ENCODE measurements at regions of chr1 and their contacts with region 1.

Region 1: GRCh38 chr1:42958488-42959319 is at the start of gene SLC2A1:
- DNase-seq: peak; percentile 97
- total RNA-seq, gene SLC2A1: 31.9 TPM

Region 2: DNA sequence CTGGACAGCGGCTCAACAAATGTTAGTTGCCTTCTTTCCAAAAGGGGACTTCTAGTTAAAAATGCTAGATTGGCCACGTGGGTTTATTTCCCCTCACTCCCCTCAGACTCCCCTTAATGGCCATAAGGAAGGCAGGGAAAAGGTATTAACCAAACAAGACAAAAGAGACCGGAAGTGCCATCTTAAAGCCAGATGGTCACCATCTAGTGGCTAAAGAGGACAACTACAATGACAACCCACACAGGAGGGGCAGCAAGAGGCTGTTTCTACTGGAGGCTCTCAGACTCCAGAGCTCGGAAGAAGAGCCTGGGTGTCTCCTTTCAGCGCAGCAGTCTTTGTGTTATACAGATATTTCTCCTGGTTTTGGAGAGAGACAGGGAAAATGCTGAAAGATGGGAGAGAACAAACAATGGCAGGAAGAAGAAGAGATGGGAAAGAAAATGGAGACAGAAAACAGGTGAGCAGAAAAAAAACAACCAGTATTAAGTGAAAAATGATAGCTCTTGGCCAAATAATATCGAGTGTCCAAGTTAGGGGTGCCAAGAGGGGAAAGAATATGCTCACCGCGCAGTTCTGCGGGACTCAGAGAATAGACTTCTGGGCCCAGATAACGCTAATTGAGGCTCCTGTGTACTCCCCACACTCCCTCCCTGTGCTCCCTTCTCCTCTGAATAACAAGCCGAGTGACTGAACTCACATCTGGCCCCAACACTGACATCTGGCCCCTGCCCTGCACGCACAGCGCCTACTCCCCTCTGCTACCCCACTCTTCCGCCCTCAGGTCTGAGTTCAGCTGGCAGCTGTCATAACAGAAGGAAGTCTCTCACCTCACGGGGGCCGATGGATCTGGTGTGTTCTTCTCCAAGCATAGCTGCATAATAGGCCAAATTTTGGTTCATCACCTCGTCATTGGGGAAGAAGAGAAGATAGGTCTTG is 201.5 kb before region 1 on chr1:
- intact Hi-C with region 1: no loop called
- DNase-seq: no peak

Region 3: DNA sequence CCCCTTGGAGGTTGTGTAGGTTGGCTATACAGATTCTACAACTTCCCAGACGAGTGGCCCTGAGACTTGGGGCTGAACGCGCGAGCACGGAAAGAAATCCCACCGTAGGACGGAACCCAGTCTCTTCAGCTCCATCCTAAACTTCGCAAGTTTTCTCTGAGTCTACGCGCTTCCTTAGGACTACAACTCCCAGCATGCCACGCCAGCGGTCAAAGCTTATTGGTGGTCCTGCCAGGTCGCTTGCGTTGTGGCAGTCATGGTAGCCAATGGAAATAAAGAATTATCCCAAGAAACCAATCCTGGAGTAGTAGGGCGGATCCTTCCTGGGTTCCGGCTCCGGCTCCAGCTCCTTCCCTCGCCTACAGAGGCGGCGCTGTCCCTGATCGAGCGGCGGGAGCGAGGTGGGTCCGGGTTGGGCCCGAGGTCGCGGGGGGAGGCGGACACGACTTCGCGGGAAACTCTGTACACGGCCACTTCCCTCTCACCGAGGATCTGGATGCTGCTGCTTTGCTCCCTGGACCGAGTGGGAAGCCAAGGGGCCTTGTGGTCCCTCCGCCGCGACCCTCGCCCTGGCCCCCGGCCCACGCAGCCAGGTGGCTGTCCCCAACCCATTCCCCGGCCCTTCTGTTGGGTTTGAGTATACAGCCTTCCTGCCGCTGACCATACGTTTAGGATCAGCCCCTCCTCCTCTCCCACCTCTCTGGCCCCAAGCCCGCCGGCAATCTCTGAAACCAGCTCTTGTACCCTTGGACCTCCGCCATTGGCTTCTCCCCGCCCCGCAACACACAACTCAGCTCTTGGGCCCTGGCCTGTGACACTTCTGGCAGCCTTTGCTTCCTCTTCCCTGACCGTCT is 112.2 kb before region 1 on chr1 and contains the start of gene ZNF691:
- intact Hi-C with region 1: no loop called
- DNase-seq: peak; percentile 95
- total RNA-seq, gene ZNF691: 6.5 TPM

Region 4: DNA sequence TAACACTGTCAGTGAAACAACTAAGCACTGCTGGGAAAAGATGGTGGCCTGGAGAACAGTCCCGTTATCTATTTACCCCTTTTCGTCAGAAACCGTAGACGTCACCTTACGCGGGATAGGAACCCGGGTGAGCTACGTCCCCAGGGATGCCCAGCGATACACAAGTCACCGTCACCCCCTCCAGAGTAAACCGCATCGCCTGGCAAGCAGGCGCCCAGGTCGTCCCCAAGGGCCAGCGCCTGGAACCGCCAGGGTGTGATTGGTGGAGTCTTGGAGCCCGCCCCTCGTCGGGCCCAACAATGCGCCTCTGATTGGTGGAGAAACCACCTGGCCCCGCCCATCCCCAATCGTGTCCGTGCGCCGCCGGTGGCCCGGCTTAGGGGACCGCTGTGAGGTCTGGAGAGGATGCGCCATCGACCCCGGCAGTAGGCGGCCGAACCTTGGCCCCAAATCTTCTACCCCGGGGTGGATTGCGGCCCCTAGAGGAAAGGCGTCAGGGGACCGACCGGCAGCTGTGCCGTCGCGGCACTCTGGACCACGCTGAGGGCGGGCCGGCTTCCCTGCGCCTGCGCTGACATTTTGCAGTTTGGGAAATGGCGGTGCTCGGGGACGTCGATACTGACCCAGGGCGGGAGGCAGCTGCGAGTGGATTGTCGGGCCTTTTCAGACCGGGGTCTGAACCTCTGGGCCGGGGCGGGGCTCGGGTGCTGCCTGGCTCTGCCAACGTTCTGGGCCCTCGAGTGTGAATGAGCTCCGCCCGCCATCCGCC is 34.4 kb before region 1 on chr1:
- intact Hi-C with region 1: loop called (anchors 1 kb)
- DNase-seq: peak; percentile 98

Measured in cardiac septum (tissue), 1 donor.